IMR-90 (cell line): ENCODE measurements at regions of chr2 and their contacts with region 1.

Region 1: GRCh38 chr2:222844323-222844722 is 16.5 kb upstream of the ACSL3 start:
- DNase-seq: peak; percentile 96
- ATAC-seq: peak; percentile 85
- H3K4me3 ChIP-seq: no peak overlapping the region
- H3K27ac ChIP-seq: peak overlapping the region; percentile 92
- H3K4me1 ChIP-seq: peaks cover 5% of the 10 kb centered on the region
- H3K27me3 ChIP-seq: no peaks in the 10 kb centered on the region
- CTCF ChIP-seq: no peak
- POLR2A ChIP-seq: no peak
- RAD21 ChIP-seq: 0 out of 2 replicates have a peak, but pooled peaks have one; percentile 10

Region 2: GRCh38 chr2:222811828-222812227 is 32.5 kb before region 1 on chr2:
- CTCF ChIA-PET with region 1: no interaction called
- POLR2A ChIA-PET with region 1: interaction called, 60 read pairs
- dilution Hi-C with region 1: no loop called
- in situ Hi-C with region 1: no loop called
- intact Hi-C with region 1: no loop called
- DNase-seq: no peak
- ATAC-seq: no peak
- H3K4me3 ChIP-seq: no peak overlapping the region
- H3K27ac ChIP-seq: no peak overlapping the region
- H3K4me1 ChIP-seq: no peaks in the 10 kb centered on the region
- H3K27me3 ChIP-seq: no peaks in the 10 kb centered on the region; the same call in none of the 2 replicates
- CTCF ChIP-seq: no peak
- POLR2A ChIP-seq: no peak
- RAD21 ChIP-seq: no peak